Mammary epithelial cell (primary cell): ENCODE measurements at regions of chr14 and their contacts with region 1.

Region 1: GRCh38 chr14:103104654-103105452 is 10.3 kb downstream of the EXOC3L4 start:
- DNase-seq: peak; percentile 62
- H3K4me3 ChIP-seq: peak overlapping the region in 1 of 3 experiments; percentile 16
- H3K27ac ChIP-seq: no peak overlapping the region
- H3K4me1 ChIP-seq: peaks cover 14% of the 10 kb centered on the region
- H3K27me3 ChIP-seq: peaks cover 30% of the 10 kb centered on the region
- CTCF ChIP-seq: peak; percentile 86 to 96

Region 2: DNA sequence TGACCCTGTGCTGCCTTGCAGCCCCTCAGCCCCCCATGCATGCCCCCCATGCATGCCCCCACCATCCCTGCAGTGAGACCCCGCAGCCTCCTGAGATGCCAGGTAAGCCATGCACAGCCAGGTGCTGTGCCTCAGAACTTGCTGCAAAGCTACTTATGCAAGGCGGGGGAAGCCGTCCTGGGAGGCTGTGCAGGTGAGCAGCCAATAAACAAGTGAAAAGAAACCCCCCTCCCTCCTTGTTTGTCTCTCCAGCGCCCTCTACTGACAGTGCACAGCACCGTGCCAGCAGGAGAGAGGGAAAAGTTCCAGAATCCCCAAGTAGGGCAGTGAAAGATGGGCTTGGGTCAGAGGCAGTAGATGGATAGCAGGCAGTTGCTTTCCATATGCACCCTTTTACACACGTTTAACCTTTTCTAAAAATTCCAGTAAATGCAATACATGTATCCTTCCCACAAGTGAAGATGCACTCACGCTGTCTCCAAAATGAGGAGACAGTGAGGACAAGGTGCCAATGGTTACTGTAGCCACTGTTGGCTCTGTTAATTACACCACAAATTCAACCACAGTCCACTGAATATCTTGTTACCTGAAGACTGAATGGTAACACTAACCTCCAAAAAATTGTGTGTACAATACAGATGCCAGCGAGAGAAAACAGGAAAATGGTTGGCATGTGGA is 36.4 kb after region 1 on chr14:
- CTCF ChIA-PET with region 1: no interaction called
- dilution Hi-C with region 1: no loop called
- in situ Hi-C with region 1: no loop called
- intact Hi-C with region 1: loop called (anchors 1 kb)
- DNase-seq: peak; percentile 34
- H3K4me3 ChIP-seq: no peak overlapping the region
- H3K27ac ChIP-seq: no peak overlapping the region
- H3K4me1 ChIP-seq: peaks cover 3% of the 10 kb centered on the region
- H3K27me3 ChIP-seq: no peaks in the 10 kb centered on the region
- CTCF ChIP-seq: peak; percentile 66 to 78

Region 3: DNA sequence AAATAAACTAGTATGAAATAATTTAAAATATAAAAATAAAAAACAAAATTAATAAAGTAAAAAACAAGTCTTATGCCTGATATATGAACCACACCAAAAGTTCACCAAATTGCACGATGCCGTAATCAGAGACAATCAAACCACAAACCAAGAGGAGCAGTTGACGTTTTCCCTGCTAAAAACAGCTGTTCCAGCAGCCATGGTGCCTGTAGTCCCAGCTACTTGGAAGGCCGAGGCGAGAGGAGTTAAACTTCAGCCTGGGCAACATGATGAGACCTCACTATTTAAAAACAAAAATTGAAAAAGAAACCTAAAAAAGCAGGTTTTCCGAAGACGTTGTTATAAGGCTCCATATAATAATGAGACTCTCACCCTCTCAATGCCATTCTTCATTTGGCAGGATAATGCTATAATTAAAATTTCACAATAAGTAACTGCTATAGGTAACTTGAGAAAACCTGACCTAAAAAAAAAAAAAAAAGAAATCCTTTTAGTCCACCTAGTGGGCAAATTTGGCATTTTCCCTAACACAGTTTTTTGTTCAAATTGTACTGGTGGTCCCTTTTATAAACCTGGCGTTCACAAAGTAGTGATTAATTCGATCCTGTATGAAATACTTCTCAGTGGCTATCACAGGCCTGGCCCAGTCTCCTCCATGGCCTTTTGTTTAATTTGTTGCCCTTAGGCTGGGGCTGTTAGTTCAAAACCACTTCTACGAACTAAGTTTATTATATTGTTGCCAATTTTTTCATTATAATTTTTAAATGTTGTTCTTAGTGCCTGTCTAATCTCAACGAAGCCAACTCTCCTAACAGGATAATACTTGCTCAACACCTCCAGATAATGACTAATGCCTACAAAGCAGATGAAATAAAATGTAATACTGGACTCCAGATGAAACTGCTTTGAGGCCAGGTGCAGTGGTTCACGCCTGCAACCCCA is 80.5 kb after region 1 on chr14:
- CTCF ChIA-PET with region 1: interaction called, 4 read pairs
- dilution Hi-C with region 1: no loop called
- in situ Hi-C with region 1: no loop called
- intact Hi-C with region 1: loop called (anchors 1 kb)
- DNase-seq: peak; percentile 82
- H3K4me3 ChIP-seq: no peak overlapping the region
- H3K27ac ChIP-seq: peak overlapping the region; percentile 36
- H3K4me1 ChIP-seq: peaks cover 11% of the 10 kb centered on the region
- H3K27me3 ChIP-seq: peaks cover 3% of the 10 kb centered on the region
- CTCF ChIP-seq: peak; percentile 54 to 63

Region 4: DNA sequence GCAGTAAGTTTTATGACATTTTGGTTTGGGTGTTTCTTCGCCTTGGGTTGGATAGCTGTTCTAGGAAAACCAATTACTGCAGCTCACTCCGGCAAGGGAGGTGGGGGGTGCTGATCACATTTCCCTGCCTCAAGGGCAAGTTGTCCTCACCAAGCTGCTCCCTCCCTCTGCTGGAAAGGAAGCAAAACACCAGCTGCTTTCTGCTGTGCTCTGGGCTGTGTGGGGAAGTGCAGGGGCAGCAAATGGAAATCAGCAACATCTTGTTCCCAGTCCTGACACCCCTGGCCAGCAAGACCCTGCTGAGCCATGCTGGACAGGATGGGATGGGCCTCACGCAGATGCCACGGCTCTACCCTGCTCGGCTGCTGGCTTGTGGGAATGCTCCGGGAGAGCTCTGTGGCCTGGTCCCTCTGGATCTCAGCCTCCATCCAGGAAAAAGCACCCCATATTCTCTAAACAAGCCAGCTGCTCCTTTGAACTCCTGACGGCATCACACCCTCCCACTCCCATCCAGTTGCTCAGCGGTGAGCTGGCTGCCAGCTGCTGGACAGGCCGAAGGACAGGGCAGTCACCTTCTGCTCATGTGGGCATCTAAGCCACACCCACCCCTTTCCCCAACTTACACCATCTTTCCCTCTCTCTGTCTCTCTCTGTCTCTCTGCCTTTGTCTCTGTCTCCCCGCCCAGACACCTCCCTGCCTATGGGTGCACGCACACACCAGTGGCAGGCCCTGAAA is 176.8 kb after region 1 on chr14:
- CTCF ChIA-PET with region 1: interaction called, 14 read pairs
- dilution Hi-C with region 1: no loop called
- in situ Hi-C with region 1: loop called in 1 of 2 experiments (anchors 10 kb)
- intact Hi-C with region 1: no loop called
- DNase-seq: peak; percentile 24
- H3K4me3 ChIP-seq: no peak overlapping the region
- H3K27ac ChIP-seq: no peak overlapping the region
- H3K4me1 ChIP-seq: peaks cover 5% of the 10 kb centered on the region
- H3K27me3 ChIP-seq: peaks cover 15% of the 10 kb centered on the region
- CTCF ChIP-seq: peak in 1 of 2 donors; percentile 51

Region 5: DNA sequence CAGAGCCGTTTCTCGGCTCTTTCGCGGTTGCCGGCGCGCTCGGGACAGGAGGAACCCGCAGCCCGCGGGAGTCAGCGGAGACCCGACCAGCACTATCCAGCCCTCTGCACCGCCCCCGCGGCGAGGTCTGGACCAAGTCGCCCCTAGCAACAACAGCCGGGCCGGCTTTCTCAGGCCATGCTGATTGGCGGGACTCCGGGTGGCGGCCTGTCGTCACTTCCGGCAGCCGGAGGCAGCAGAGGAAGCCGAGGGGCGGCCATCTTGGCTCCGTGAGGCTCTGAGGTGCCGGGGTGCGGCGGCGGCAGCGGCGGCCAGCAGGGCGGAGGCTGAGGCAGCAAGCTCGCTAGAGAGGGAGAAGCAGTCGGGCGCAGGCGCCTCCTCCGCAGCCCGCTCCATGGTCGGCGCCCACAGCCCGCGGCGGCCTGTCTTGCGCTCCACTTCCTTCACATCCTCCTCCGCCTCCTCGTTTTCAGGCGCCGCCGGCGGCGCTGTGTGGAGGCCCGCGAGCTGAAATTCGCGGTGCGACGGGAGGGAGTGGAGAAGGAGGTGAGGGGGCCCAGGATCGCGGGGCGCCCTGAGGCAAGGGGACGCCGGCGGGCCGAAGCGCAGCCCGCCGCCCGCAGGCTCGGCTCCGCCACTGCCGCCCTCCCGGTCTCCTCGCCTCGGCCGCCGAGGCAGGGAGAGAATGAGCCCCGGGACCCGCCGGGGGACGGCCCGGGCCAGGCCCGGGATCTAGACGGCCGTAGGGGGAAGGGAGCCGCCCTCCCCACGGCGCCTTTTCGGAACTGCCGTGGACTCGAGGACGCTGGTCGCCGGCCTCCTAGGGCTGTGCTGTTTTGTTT is 280.5 kb after region 1 on chr14 and contains the start of gene MARK3:
- CTCF ChIA-PET with region 1: interaction called, 20 read pairs
- dilution Hi-C with region 1: no loop called
- in situ Hi-C with region 1: no loop called
- intact Hi-C with region 1: no loop called
- DNase-seq: peak; percentile 97
- H3K4me3 ChIP-seq: peak within 1 kb of the TSS; percentile 71 to 99 (median 93)
- H3K27ac ChIP-seq: peak within 1 kb of the TSS; percentile 75
- H3K4me1 ChIP-seq: peaks cover 24% of the 10 kb centered on the region
- H3K27me3 ChIP-seq: no peaks in the 10 kb centered on the region
- CTCF ChIP-seq: peak in 1 of 2 donors; percentile 2
- total RNA-seq, gene MARK3: 85.7 to 175 TPM

Region 6: GRCh38 chr14:103391048-103391447 is 286.2 kb after region 1 on chr14:
- CTCF ChIA-PET with region 1: interaction called, 20 read pairs
- dilution Hi-C with region 1: no loop called
- in situ Hi-C with region 1: no loop called
- intact Hi-C with region 1: loop called (anchors 1 kb)
- DNase-seq: peak; percentile 51
- H3K4me3 ChIP-seq: no peak overlapping the region
- H3K27ac ChIP-seq: no peak overlapping the region
- H3K4me1 ChIP-seq: peaks cover 25% of the 10 kb centered on the region
- H3K27me3 ChIP-seq: no peaks in the 10 kb centered on the region
- CTCF ChIP-seq: peak; percentile 70 to 74